ENCODE measurements at regions of chr1 and their contacts with region 1.

Region 1: DNA sequence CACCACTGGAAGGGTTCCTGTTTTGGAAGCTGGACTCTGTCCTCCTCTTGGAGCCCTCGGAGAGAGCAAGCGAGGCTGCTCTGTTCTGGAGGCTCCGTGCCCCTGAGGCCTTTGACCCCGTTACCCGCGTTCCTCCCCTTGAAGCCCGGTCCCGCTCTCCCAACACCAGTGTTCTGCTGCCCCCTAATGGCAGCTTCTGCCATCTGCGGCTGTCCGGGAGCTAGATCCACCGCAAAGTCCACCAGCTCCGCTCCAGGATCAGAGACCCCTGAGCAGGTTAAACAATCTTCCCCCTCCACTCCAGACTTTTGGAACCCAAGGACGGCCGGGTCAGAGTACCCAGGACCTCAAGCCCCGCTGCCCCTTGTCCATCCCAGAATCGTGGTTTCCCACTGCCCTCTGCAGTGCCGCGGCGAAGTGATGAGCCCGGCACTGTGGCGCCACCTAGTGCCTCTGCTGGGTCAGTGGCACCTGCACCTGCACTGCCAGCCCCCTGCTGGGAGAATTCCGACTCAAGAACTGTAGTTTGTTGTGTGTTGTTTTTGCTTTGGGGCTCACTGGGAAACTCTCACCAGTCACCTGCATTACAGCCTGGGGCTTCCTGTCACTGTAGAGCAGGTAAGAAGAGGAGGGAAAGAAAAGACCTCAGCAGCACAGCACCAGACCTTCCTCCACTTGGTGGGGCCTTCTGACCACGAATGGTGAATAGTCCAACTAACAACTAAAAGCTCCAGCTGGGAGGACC is 63.5 kb upstream of the NFASC start:
- DNase-seq: peak; percentile 91
- CTCF ChIP-seq: peak; percentile 99

Region 2: DNA sequence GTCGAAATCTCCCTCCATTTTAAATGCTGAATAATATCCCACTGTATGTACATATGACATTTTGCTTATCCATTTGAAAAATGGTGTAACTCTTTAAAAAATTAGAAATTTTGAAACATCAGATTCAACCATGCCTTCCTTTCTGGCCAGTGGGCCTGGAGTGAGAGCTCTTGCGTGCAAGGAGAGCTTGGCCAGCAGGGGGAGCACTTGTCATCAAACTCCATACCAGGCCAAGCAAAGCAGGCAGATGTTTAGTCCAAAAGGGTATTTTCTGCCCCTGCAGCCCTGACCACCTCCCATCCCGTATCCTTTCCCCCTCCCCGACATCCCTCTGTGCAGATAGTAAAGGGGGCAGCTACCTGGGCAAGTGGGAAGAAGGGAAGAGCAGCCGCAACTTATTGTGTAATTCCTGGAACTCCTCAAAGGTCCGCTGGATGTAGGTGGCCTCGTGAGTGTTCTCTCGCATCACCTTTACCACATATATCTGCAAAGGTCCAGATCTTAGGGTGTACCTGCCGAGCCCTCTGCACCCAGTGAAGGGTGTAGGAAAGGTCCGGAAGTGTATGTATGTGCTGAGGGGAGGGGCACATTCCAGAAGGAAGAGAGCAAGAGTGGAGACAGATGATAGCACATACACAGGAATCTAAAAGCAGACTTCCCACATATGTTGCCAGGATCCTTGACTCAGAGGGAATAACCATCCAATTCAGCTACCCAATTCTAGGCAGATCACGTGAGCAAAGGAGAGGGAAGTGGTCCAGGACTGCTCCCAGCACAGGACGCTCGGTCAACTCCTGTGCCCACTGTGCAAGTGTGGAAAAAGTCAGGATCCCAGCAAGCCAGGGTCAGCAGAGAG is 375.6 kb before region 1 on chr1:
- in situ Hi-C with region 1: loop called (anchors 10 kb)
- DNase-seq: peak; percentile 86
- CTCF ChIP-seq: peak; percentile 83

Region 3: DNA sequence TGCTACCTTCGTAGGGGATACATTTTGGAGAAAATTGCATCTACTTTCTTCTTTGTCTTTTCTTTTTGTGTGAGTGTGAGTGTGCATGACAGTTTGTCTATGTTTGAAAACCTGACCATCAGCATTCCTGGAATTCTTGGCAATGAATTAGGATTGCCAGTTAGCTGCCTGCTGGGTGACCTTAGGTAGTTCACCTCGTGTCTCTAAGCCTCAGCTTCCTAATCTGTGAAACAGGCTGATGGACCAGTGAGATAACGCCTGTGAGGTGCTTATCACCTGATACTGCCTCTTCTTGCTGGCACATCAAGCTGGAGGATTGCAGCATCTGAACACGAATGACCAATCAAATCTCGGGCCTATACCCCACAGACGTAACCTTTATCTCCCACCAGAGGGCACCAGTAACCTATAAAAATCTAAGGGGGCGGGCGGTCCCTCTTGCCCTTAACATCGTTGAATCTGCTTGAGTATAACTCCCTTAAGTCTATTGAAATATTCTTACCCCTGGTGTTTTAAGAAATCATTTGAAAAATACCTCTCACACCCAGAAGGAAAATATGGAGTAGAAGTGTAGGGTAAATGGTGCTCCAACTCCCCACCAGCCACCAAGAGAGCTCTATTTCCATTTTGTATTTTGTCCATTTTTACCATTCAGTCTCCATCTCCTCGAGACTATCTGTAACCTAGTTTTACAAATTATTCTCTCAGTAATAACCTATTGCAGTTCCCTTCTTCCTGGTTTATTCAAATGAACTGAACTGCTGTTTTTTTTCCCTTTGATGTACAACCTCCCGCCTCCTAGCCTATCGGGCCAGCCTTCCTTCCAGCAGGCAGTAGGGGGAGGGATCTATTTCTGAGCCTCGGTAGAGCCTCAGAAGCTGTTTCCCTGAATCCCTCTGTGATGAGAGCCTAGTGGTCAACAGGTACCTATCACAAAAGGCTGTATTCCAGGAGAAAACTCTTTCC is 241.2 kb before region 1 on chr1:
- in situ Hi-C with region 1: loop called (anchors 5 kb)
- DNase-seq: peak; percentile 82
- CTCF ChIP-seq: peak; percentile 53

Region 4: DNA sequence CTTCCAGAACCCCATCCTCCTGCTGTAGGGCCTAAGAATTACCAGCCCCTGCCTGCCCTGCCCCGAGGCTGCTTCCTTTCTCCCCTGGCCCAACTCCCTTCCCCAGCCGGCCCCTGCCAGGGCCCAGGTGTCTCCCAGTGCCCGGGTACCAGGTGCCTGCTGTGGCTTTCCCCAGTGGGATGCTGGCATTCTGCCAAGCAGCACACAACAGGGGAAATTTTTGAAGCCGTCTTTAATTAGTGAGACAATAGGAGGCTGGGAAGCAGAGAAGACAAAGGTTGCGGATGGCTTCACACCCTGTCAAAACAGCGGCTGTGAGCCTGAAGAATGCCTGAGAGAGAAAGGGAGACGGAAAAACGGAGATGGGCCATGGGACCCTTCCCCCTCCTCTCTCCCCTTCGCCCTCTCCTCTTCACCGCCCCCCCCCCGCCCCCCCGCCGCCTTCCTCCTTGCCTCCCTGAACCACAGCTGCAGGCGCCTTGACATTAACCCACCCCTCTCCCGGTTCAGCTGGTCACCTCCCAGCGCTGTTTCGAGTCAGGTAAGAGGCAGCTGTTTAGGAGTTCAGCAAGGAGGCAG is 155.2 kb before region 1 on chr1:
- in situ Hi-C with region 1: no loop called
- DNase-seq: no peak
- CTCF ChIP-seq: no peak